Panc1 (cell line): ENCODE measurements at regions of chr16 and their contacts with region 1.

Region 1: GRCh38 chr16:53198933-53199332 is 144.1 kb downstream of the CHD9 start:
- DNase-seq: no peak
- ATAC-seq: no peak
- H3K4me3 ChIP-seq: no peak overlapping the region
- H3K27ac ChIP-seq: no peak overlapping the region
- H3K4me1 ChIP-seq: no peaks in the 10 kb centered on the region
- H3K27me3 ChIP-seq: no peaks in the 10 kb centered on the region
- CTCF ChIP-seq: no peak

Region 2: GRCh38 chr16:53159781-53160436 is 39.0 kb before region 1 on chr16:
- CTCF ChIA-PET with region 1: no interaction called
- POLR2A ChIA-PET with region 1: no interaction called
- in situ Hi-C with region 1: no loop called
- intact Hi-C with region 1: no loop called
- DNase-seq: peak; percentile 7
- ATAC-seq: 0 out of 2 replicates have a peak, but pooled peaks have one; percentile 63
- H3K4me3 ChIP-seq: no peak overlapping the region
- H3K27ac ChIP-seq: no peak overlapping the region
- H3K4me1 ChIP-seq: no peaks in the 10 kb centered on the region
- H3K27me3 ChIP-seq: no peaks in the 10 kb centered on the region
- CTCF ChIP-seq: peak; percentile 72

Region 3: DNA sequence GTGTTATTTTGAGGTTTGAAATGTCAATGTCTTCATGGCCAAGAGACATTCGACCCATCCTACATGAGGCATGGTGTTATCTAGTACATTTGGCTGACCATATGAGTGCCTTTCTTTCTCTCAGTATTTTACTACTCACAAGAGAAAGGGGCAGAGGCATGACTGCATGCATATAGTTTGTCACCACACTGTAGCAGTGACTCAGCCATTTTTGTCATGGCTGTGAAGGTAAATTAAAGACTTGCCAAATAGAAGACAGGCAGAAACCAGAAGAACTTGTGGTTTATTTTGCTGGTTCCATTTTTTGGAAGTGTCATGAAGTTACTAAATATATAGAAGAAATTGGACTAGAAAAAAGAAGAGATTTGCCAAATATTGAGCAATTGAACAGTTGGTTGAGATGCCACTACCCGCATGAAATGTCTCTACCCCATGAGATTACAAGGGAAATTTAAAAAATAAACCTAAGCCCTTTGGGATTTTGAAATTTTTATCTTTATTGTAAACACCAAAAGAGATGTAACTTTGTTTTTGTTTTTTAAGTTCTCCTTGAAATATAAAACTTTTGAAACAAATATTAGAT is 26.1 kb after region 1 on chr16:
- CTCF ChIA-PET with region 1: no interaction called
- POLR2A ChIA-PET with region 1: interaction called, 14 read pairs
- in situ Hi-C with region 1: no loop called
- intact Hi-C with region 1: no loop called
- DNase-seq: no peak
- ATAC-seq: no peak
- H3K4me3 ChIP-seq: no peak overlapping the region
- H3K27ac ChIP-seq: no peak overlapping the region
- H3K4me1 ChIP-seq: no peaks in the 10 kb centered on the region
- H3K27me3 ChIP-seq: no peaks in the 10 kb centered on the region
- CTCF ChIP-seq: no peak

Region 4: DNA sequence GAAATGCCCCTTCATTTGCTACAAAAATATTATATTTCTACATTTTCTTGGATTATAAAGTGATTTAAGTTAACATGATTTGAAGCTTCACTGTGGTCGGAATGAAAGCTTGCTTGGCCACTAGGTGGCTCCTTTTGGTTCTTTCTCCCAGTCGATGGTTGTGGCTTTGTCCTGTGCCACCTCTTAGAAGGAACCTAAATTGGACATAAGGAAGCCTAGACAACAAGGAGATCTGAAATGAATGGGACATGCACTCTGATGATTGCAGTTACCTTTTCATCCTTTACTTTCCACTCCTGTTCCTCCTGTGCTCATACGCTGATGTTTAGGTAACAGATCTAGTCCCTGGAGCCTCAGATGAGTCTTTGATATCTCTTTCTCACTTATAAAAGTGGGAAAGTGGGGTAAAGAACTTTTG is 544.2 kb after region 1 on chr16:
- CTCF ChIA-PET with region 1: no interaction called
- POLR2A ChIA-PET with region 1: no interaction called
- in situ Hi-C with region 1: no loop called
- intact Hi-C with region 1: no loop called
- DNase-seq: no peak
- ATAC-seq: 0 out of 2 replicates have a peak, but pooled peaks have one; percentile 49
- H3K4me3 ChIP-seq: no peak overlapping the region
- H3K27ac ChIP-seq: peak overlapping the region; percentile 85; the same call in 1 of the 2 replicates
- H3K4me1 ChIP-seq: peaks cover 22% of the 10 kb centered on the region
- H3K27me3 ChIP-seq: no peaks in the 10 kb centered on the region
- CTCF ChIP-seq: peak; percentile 79